ENCODE measurements at regions of chr1 and their contacts with region 1.

Region 1: GRCh38 chr1:23959041-23959460 is 577 bp upstream of the PNRC2 start:
- DNase-seq: peak; percentile 78 to 97 (median 84)
- ATAC-seq: peak; percentile 80
- H3K4me3 ChIP-seq: peak overlapping the region; percentile 61
- H3K4me3 Mint-ChIP-seq: peak overlapping the region; percentile 100
- H3K27ac ChIP-seq: peak overlapping the region; percentile 92 to 97
- H3K27ac Mint-ChIP-seq: peak overlapping the region; percentile 100
- H3K4me1 ChIP-seq: peaks cover 20% of the 10 kb centered on the region
- H3K4me1 Mint-ChIP-seq: peaks cover 59% of the 10 kb centered on the region
- H3K27me3 ChIP-seq: no peaks in the 10 kb centered on the region
- H3K27me3 Mint-ChIP-seq: no peaks in the 10 kb centered on the region
- CTCF ChIP-seq: no peak

Region 2: GRCh38 chr1:23800400-23801337 is 158.4 kb before region 1 on chr1 and contains the start of gene GALE:
- CTCF ChIA-PET with region 1: no interaction called
- POLR2A ChIA-PET with region 1: no interaction called
- intact Hi-C with region 1: loop called in 1 of 2 experiments (anchors 10 kb)
- DNase-seq: peak; percentile 94 to 99 (median 97)
- ATAC-seq: peak; percentile 90
- H3K4me3 ChIP-seq: peak within 1 kb of the TSS; percentile 81
- H3K4me3 Mint-ChIP-seq: peak within 1 kb of the TSS; percentile 97
- H3K27ac ChIP-seq: peak within 1 kb of the TSS; percentile 78 to 82
- H3K27ac Mint-ChIP-seq: peak within 1 kb of the TSS; percentile 92
- H3K4me1 ChIP-seq: peaks cover 27% of the 10 kb centered on the region
- H3K4me1 Mint-ChIP-seq: peaks cover 14% of the 10 kb centered on the region
- H3K27me3 ChIP-seq: no peaks in the 10 kb centered on the region
- H3K27me3 Mint-ChIP-seq: no peaks in the 10 kb centered on the region
- CTCF ChIP-seq: no peak
- total RNA-seq, gene GALE: 5.4 to 6.9 TPM

Region 3: GRCh38 chr1:23979878-23980724 is 21.1 kb after region 1 on chr1 and contains the start of gene SRSF10:
- CTCF ChIA-PET with region 1: interaction called, 12 read pairs
- POLR2A ChIA-PET with region 1: interaction called, 164 read pairs
- intact Hi-C with region 1: loop called (anchors 1 kb)
- DNase-seq: peak; percentile 93 to 100 (median 98)
- ATAC-seq: peak; percentile 95
- H3K4me3 ChIP-seq: peak within 1 kb of the TSS; percentile 92
- H3K4me3 Mint-ChIP-seq: peak within 1 kb of the TSS; percentile 99
- H3K27ac ChIP-seq: peak within 1 kb of the TSS; percentile 97 to 98
- H3K27ac Mint-ChIP-seq: peak within 1 kb of the TSS; percentile 95
- H3K4me1 ChIP-seq: peaks cover 19% of the 10 kb centered on the region
- H3K4me1 Mint-ChIP-seq: peaks cover 54% of the 10 kb centered on the region
- H3K27me3 ChIP-seq: no peaks in the 10 kb centered on the region
- H3K27me3 Mint-ChIP-seq: no peaks in the 10 kb centered on the region
- CTCF ChIP-seq: no peak
- total RNA-seq, gene SRSF10: 346 to 356 TPM

Region 4: GRCh38 chr1:24027838-24028468 is 68.9 kb after region 1 on chr1:
- CTCF ChIA-PET with region 1: interaction called, 7 read pairs
- POLR2A ChIA-PET with region 1: interaction called, 3 read pairs
- intact Hi-C with region 1: loop called (anchors 1 to 2 kb)
- DNase-seq: peak in 3 of 14 experiments; percentile 35 to 47 (median 45)
- ATAC-seq: peak; percentile 32
- H3K4me3 ChIP-seq: no peak overlapping the region
- H3K4me3 Mint-ChIP-seq: no peak overlapping the region
- H3K27ac ChIP-seq: no peak overlapping the region
- H3K27ac Mint-ChIP-seq: no peak overlapping the region
- H3K4me1 ChIP-seq: no peaks in the 10 kb centered on the region
- H3K4me1 Mint-ChIP-seq: peaks cover 4% of the 10 kb centered on the region
- H3K27me3 ChIP-seq: no peaks in the 10 kb centered on the region
- H3K27me3 Mint-ChIP-seq: no peaks in the 10 kb centered on the region
- CTCF ChIP-seq: peak; percentile 21

Region 5: GRCh38 chr1:24744911-24745710 is 786.1 kb after region 1 on chr1 and contains the start of gene CLIC4:
- CTCF ChIA-PET with region 1: no interaction called
- POLR2A ChIA-PET with region 1: no interaction called
- intact Hi-C with region 1: loop called in 1 of 2 experiments (anchors 10 kb)
- DNase-seq: peak; percentile 98 to 100 (median 99)
- ATAC-seq: peak; percentile 87
- H3K4me3 ChIP-seq: peak within 1 kb of the TSS; percentile 58
- H3K4me3 Mint-ChIP-seq: peak within 1 kb of the TSS; percentile 93
- H3K27ac ChIP-seq: no peak within 1 kb of the TSS
- H3K27ac Mint-ChIP-seq: peak within 1 kb of the TSS; percentile 80
- H3K4me1 ChIP-seq: peaks cover 15% of the 10 kb centered on the region
- H3K4me1 Mint-ChIP-seq: peaks cover 18% of the 10 kb centered on the region
- H3K27me3 ChIP-seq: peaks cover 0 to 3% of the 10 kb centered on the region in 2 experiments
- H3K27me3 Mint-ChIP-seq: no peaks in the 10 kb centered on the region
- CTCF ChIP-seq: no peak
- total RNA-seq, gene CLIC4: 1.1 to 1.3 TPM

Measured in CD4-positive, alpha-beta T cell (primary cell).